Common myeloid progenitor, CD34-positive (primary cell): ENCODE measurements at regions of chr3 and their contacts with region 1.

Region 1: DNA sequence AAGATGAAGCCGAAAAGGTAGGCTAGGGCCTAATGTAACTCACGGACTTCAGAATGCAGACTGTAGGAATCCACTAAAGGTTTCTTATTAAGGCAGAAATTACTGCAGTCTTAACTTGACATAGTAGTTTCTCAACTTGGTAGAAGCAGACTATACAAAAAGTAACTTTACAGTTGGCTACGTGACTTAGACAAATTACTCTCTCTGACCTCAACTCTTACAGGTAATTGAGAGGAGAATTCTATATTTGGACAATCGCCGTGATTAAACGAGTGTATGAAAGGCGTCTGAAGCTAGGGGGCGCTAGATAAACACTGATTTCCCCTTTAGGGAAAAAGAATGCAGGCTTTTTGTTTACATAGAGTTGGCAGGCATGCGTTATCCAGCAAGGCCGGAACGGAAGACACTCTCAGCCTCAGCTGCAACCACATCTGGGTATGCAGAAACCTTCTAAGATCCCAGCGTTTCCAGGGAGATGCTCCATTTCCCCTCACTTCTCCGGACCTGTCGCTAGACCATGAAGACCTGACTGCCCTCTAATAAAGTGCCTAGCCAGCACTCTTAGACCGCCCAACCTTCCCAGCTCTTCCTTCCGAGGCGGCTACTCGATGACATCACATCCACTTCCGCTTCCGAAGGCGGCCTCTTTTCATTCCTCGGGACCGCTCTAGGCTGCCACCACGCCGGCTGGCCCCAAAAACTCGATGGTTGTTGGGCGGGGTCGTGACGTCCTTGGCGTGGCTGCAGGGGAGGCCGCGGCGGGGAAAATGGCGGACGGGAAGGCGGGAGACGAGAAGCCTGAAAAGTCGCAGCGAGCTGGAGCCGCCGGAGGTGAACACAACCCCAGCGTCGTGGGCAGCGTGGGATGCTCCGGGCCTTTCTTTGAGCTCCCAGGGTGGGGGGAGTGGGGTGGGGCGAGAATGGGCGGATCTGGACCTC is at the start of gene PCNP:
- DNase-seq: peak; percentile 99
- H3K4me3 ChIP-seq: peak within 1 kb of the TSS; percentile 82 to 98 (median 89)
- H3K27ac ChIP-seq: peak within 1 kb of the TSS; percentile 98 to 99
- H3K4me1 ChIP-seq: peaks cover 7 to 24% (median 17%) of the 10 kb centered on the region in 4 experiments
- H3K27me3 ChIP-seq: no peaks in the 10 kb centered on the region

Region 2: GRCh38 chr3:101325393-101326134 is 248.2 kb before region 1 on chr3:
- CTCF ChIA-PET with region 1: no interaction called
- POLR2A ChIA-PET with region 1: no interaction called
- DNase-seq: peak; percentile 8 to 60 (median 15)
- H3K4me3 ChIP-seq: no peak overlapping the region
- H3K27ac ChIP-seq: no peak overlapping the region
- H3K4me1 ChIP-seq: no peaks in the 10 kb centered on the region
- H3K27me3 ChIP-seq: no peaks in the 10 kb centered on the region

Region 3: DNA sequence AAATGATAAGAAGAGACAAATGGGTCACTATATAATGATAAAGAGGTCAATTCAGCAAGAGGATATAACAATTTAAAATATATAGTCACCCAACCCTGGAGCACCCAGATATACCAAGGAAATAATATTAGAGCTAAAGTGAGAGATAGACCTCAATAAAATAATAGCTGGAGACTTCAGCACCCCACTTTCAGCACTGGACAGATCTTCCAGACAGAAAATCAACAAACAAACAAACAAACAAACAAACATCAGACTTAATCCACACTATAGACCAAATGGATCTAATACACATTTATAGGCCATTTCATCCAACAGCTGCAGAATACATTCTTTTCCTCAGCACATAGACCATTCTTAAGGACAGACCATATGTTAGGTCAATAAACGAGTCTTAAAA is 140.1 kb before region 1 on chr3:
- CTCF ChIA-PET with region 1: no interaction called
- POLR2A ChIA-PET with region 1: no interaction called
- DNase-seq: no peak
- H3K4me3 ChIP-seq: no peak overlapping the region
- H3K27ac ChIP-seq: no peak overlapping the region
- H3K4me1 ChIP-seq: no peaks in the 10 kb centered on the region
- H3K27me3 ChIP-seq: no peaks in the 10 kb centered on the region

Region 4: DNA sequence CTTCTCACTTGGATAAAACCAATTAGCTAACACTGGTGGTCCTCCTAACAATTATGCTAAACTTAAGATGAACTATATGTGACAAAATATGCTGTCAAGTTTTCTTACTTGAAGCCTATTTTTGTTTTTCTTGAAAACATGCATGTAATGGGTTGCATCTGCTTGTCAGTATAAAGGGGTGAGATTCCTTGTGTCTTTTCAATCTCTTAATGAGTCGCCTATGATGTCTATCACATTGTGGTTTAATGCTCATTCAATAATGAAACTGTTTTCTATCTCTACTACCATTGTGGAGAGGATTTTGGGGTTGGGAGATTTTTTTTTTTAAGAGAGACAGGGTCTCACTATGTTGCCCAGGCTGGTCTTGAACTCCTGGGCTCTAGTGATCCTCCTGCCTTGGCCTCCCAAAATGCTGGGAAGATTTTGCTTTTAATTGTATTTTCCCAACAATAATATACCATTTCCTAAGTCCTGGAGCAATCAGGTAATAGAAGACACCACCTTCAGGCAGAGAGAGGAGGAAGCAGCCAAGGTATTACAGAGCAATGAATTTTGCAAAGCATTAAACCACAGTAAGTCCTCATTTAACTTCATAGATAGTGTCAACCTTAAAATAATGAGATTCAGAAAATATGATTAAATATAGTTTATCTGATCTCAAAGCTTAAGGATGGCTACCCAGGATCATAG is 29.4 kb before region 1 on chr3:
- CTCF ChIA-PET with region 1: no interaction called
- POLR2A ChIA-PET with region 1: no interaction called
- DNase-seq: no peak
- H3K4me3 ChIP-seq: no peak overlapping the region
- H3K27ac ChIP-seq: no peak overlapping the region
- H3K4me1 ChIP-seq: peaks cover 0 to 12% (median 3%) of the 10 kb centered on the region in 4 experiments
- H3K27me3 ChIP-seq: no peaks in the 10 kb centered on the region

Region 5: DNA sequence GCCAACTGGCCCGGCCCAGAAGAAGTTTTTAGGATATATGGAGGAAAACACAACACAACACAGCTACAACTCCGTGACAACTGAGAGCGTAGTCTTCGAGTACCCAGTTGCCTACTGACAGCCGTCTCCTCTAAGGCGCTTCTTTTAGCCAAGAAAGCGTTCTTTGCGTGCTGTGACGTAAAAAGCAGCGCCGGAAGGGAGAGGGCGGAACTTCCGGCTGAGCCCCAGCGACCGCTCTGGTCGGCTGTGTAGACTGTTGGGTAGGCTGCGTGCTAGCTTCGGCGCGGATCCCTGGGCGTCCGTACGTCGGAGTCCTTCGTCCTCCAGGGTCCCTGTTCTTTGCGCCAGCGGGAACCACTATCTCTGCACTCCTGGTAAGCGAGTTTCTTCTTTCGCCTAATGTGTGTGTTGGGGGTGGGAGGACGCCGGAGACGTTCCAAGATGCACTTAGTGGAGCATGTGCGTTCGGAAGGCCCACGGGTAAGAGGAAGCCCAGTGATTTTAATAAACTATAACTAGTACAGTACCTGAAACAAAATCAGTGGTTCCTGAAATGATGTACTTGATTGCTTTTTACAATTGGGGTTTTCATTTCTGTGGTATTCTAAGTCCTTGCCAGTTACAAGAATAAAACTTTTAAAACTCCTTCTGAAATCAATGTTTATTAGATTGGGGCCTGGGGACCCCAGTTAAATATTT is 11.9 kb before region 1 on chr3 and contains the start of gene TRMT10C:
- CTCF ChIA-PET with region 1: interaction called, 20 read pairs
- POLR2A ChIA-PET with region 1: interaction called, 11 read pairs
- DNase-seq: peak; percentile 96 to 98 (median 98)
- H3K4me3 ChIP-seq: peak within 1 kb of the TSS; percentile 91 to 99 (median 94)
- H3K27ac ChIP-seq: peak within 1 kb of the TSS; percentile 87 to 92
- H3K4me1 ChIP-seq: peaks cover 3 to 20% (median 10%) of the 10 kb centered on the region in 4 experiments
- H3K27me3 ChIP-seq: peaks cover 0 to 6% (median 0%) of the 10 kb centered on the region in 5 experiments

Region 6: DNA sequence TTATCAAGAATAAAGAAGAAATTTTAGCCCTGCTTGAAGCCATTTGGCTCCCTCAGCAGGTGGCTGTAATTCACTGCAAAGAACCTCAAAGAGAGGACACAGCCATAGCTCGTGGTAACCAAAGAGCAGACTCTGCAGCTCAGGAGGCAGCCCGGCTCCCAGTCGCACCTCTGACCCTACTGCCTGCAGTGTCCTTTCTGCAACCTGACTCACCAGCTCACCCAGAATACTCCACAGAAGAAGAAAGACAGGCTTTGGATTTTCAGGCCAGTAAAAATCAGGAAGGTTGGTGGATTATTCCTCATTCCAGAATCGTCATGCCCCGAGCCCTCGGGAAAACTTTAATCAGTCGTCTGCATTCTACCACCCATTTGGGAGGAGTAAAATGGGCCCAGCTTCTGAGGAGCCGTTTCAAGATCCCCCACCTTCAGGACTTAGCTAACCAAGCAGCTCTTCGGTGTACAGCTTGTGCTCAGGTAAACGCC is 64.6 kb after region 1 on chr3:
- CTCF ChIA-PET with region 1: interaction called, 12 read pairs
- POLR2A ChIA-PET with region 1: no interaction called
- DNase-seq: no peak
- H3K4me3 ChIP-seq: no peak overlapping the region
- H3K27ac ChIP-seq: peak overlapping the region in 1 of 2 experiments; percentile 62
- H3K4me1 ChIP-seq: peaks cover 0 to 4% (median 2%) of the 10 kb centered on the region in 4 experiments
- H3K27me3 ChIP-seq: no peaks in the 10 kb centered on the region

Region 7: GRCh38 chr3:101676765-101677435 is 103.2 kb after region 1 on chr3 and contains the start of gene ZBTB11:
- CTCF ChIA-PET with region 1: interaction called, 6 read pairs
- POLR2A ChIA-PET with region 1: interaction called, 12 read pairs
- DNase-seq: peak; percentile 100
- H3K4me3 ChIP-seq: peak within 1 kb of the TSS; percentile 86 to 99 (median 97)
- H3K27ac ChIP-seq: peak within 1 kb of the TSS; percentile 90 to 96
- H3K4me1 ChIP-seq: peaks cover 12 to 23% (median 17%) of the 10 kb centered on the region in 4 experiments
- H3K27me3 ChIP-seq: no peaks in the 10 kb centered on the region